ENCODE measurements at regions of chr1 and their contacts with region 1.

Region 1: DNA sequence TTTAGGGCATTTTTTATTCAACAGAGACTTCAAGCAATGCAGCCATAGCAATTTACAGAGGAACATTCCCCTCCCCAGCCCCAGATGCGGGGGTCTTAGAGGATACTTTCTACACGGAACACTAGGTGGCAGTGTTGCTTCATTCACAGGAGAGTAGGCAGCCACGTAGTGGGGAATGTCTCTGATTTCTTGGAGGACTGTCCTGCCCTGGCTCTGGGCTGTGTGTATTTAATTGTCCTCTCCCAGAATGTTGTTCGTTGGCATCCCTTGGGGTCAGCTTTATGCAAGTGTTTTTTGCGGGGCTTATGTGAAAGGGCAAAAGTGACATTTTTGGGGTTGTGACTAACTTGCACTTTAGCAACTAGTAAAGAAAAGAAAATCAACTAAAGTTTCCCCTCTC is 96.9 kb downstream of the PAPPA2 start:
- DNase-seq: no peak
- H3K4me3 ChIP-seq: no peak overlapping the region
- H3K27me3 ChIP-seq: no peaks in the 10 kb centered on the region; the same call in 1 of the 2 replicates
- CTCF ChIP-seq: peak; percentile 88

Region 2: GRCh38 chr1:176325664-176326063 is 234.2 kb before region 1 on chr1:
- CTCF ChIA-PET with region 1: no interaction called
- POLR2A ChIA-PET with region 1: no interaction called
- DNase-seq: no peak
- H3K4me3 ChIP-seq: no peak overlapping the region
- H3K27me3 ChIP-seq: no peaks in the 10 kb centered on the region
- CTCF ChIP-seq: no peak

Region 3: GRCh38 chr1:176416777-176417176 is 143.1 kb before region 1 on chr1:
- CTCF ChIA-PET with region 1: no interaction called
- POLR2A ChIA-PET with region 1: no interaction called
- DNase-seq: no peak
- H3K4me3 ChIP-seq: no peak overlapping the region
- H3K27me3 ChIP-seq: no peaks in the 10 kb centered on the region
- CTCF ChIP-seq: no peak

Region 4: GRCh38 chr1:176682830-176683535 is 123.1 kb after region 1 on chr1:
- CTCF ChIA-PET with region 1: interaction called, 115 read pairs
- POLR2A ChIA-PET with region 1: no interaction called
- DNase-seq: no peak
- H3K4me3 ChIP-seq: no peak overlapping the region
- H3K27me3 ChIP-seq: peaks cover 3% of the 10 kb centered on the region; the same call in 1 of the 2 replicates
- CTCF ChIP-seq: no peak

Region 5: GRCh38 chr1:176691251-176692228 is 131.7 kb after region 1 on chr1:
- CTCF ChIA-PET with region 1: interaction called, 115 read pairs
- POLR2A ChIA-PET with region 1: no interaction called
- DNase-seq: peak; percentile 6
- H3K4me3 ChIP-seq: no peak overlapping the region
- H3K27me3 ChIP-seq: no peaks in the 10 kb centered on the region
- CTCF ChIP-seq: peak; percentile 70

Region 6: GRCh38 chr1:176745945-176746344 is 186.1 kb after region 1 on chr1:
- CTCF ChIA-PET with region 1: interaction called, 18 read pairs
- POLR2A ChIA-PET with region 1: no interaction called
- DNase-seq: no peak
- H3K4me3 ChIP-seq: no peak overlapping the region
- H3K27me3 ChIP-seq: no peaks in the 10 kb centered on the region
- CTCF ChIP-seq: peak; percentile 18; the same call in 1 of the 2 replicates

Region 7: GRCh38 chr1:176843352-176844297 is 283.7 kb after region 1 on chr1:
- CTCF ChIA-PET with region 1: interaction called, 75 read pairs
- POLR2A ChIA-PET with region 1: no interaction called
- DNase-seq: no peak
- H3K4me3 ChIP-seq: no peak overlapping the region
- H3K27me3 ChIP-seq: no peaks in the 10 kb centered on the region
- CTCF ChIP-seq: peak; percentile 52

Region 8: GRCh38 chr1:176880954-176881595 is 321.2 kb after region 1 on chr1:
- CTCF ChIA-PET with region 1: interaction called, 43 read pairs
- POLR2A ChIA-PET with region 1: no interaction called
- DNase-seq: no peak
- H3K4me3 ChIP-seq: no peak overlapping the region
- H3K27me3 ChIP-seq: no peaks in the 10 kb centered on the region
- CTCF ChIP-seq: peak; percentile 81